PC-9 (cell line): ENCODE measurements at regions of chr12 and their contacts with region 1.

Region 1: DNA sequence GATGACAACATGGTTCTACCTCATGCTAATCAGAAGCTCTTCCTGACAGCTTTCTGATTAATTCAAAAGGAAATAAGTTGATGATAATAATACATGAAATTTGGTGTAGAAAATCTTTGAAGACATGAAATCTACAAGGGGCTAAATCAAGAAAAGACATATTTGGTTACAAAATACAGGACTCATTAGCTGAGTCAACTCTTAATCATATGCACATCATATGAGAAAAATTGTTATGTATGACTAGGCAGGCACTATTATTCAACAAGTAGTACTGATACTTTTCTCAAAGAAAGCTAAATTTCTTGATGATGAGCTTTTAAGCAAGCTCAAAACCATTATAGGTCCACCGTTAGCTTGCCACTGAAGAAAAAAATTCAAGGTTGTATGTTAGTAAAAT is 7.1 kb downstream of the ABCC9 start:
- DNase-seq: no peak
- H3K4me3 ChIP-seq: no peak overlapping the region
- H3K27ac ChIP-seq: no peak overlapping the region
- H3K4me1 ChIP-seq: no peaks in the 10 kb centered on the region
- H3K27me3 ChIP-seq: no peaks in the 10 kb centered on the region
- CTCF ChIP-seq: no peak

Region 2: GRCh38 chr12:21800011-21800410 is 134.2 kb before region 1 on chr12:
- CTCF ChIA-PET with region 1: no interaction called
- POLR2A ChIA-PET with region 1: no interaction called
- intact Hi-C with region 1: no loop called
- DNase-seq: no peak
- H3K4me3 ChIP-seq: no peak overlapping the region
- H3K27ac ChIP-seq: no peak overlapping the region
- H3K4me1 ChIP-seq: no peaks in the 10 kb centered on the region
- H3K27me3 ChIP-seq: no peaks in the 10 kb centered on the region
- CTCF ChIP-seq: no peak

Region 3: DNA sequence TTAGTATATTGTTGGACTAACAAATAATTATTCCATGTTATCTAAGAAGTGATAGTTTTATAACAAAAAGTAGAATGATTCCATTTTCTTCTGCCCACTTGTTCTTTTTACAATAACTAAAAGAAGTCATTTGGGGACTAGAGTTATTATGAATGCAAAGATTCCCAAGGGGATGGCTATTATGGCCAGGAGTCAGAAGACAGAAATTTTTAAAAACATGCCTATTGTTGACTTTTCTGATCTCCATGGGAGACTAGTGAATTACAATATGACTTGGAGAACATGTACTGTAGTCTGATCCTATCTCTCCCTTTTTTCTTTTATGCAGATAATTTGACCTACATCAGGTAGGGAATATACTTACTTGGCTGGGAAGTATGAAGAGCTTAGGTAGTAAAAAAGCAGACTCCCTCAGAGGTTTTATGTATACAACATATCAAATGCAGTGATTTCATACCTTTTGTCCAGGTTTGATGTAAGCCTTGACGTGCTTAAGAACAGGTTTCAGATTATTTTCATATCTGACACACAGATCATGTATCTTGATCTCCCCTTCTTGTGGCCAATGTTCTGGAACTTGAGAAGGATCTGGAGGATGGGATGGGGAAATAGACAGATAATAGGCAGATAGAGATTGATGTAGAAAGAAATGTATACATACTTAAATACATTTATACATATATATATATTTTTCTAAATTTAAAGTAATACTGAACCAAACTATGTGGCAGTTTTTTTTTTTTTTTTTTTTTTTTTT is 118.7 kb before region 1 on chr12:
- CTCF ChIA-PET with region 1: no interaction called
- POLR2A ChIA-PET with region 1: no interaction called
- intact Hi-C with region 1: no loop called
- DNase-seq: no peak
- H3K4me3 ChIP-seq: no peak overlapping the region
- H3K27ac ChIP-seq: no peak overlapping the region
- H3K4me1 ChIP-seq: no peaks in the 10 kb centered on the region
- H3K27me3 ChIP-seq: no peaks in the 10 kb centered on the region
- CTCF ChIP-seq: no peak

Region 4: DNA sequence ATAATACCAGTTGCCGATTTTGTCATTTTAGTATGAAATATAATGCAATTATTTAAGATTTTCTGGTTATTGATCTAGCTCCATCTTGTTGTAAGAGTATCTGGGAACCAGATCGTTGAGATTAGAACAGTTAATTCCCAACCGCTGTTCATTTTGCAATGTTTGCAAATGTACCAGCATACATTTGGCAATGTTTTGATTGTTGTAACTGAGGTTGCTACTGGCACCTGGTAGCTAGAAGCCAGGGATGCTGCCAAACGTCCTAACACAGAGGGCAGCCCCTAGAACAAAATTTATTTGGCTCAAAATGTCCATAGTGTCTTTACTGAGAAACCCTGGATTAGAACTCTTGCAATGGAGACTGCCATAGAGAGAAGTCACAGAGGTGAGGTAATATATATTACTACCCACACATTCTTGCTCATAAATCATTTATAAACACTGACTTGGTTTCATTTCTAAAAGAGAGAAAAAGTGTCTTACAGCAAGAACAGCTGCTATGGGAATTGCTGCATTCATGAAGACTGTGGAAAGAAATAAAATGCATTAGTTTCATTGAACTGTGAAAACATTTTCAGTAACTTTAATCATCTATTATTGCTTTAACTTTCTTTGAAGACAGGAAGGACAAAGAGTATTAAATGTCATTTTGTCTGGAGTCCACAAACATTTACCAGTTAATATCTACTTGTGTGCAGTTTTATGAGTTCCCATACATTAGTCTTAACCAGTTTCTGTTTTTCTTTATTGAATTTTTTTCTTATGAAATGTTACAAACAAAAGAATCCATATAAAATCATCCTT is 39.2 kb before region 1 on chr12:
- CTCF ChIA-PET with region 1: no interaction called
- POLR2A ChIA-PET with region 1: no interaction called
- intact Hi-C with region 1: loop called (anchors 2 kb)
- DNase-seq: no peak
- H3K4me3 ChIP-seq: no peak overlapping the region
- H3K27ac ChIP-seq: no peak overlapping the region
- H3K4me1 ChIP-seq: no peaks in the 10 kb centered on the region
- H3K27me3 ChIP-seq: no peaks in the 10 kb centered on the region
- CTCF ChIP-seq: no peak